AG04450 (cell line): ENCODE measurements at regions of chr1 and their contacts with region 1.

Region 1: DNA sequence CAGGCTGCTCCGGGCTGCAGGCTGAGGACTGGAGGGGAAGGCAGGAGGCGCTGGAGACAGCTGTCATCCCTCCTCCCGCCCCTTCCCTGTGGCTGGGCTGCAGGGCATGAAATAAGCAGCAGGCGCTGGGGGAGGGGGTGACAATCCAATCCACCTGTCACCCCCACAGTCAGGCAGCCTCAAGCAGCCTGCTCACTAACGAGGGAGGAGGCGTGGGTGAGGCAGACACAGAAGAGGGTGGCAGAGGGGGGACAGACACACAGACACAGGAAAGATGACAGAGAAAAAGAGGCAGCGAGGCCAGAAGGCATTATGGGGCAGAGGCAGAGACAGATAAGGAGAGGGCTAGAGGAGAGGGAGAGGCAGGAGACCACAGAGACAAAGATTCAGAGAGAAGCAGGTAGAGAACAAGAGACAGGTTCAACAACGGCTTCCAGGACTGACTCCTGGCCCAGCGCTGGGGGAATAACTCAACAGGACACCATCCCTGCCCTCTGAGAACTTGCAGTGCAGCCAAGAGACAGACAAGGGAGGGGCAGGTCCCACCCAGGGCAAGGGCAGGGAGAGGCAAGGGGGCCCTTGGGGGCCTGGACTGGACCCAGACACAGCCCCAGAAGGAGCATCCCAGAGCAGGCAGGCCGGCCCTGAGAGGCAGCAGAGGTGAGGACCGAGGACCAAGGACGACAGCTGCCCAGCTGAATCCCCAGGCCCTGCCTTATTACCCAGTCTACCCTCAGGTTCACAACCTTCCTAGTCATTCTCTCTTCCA is 11.2 kb downstream of the MEF2D start:
- DNase-seq: no peak
- H3K4me3 ChIP-seq: no peak overlapping the region
- H3K27ac ChIP-seq: no peak overlapping the region
- H3K27me3 ChIP-seq: no peaks in the 10 kb centered on the region
- CTCF ChIP-seq: 0 out of 2 replicates have a peak, but pooled peaks have one; percentile 22

Region 2: GRCh38 chr1:155038602-155039307 is 1450.6 kb before region 1 on chr1:
- CTCF ChIA-PET with region 1: no interaction called
- POLR2A ChIA-PET with region 1: interaction called, 11 read pairs
- DNase-seq: no peak
- H3K4me3 ChIP-seq: no peak overlapping the region
- H3K27ac ChIP-seq: no peak overlapping the region
- H3K27me3 ChIP-seq: peaks cover 41% of the 10 kb centered on the region
- CTCF ChIP-seq: no peak